Endothelial cell of umbilical vein (primary cell): ENCODE measurements at regions of chr6 and their contacts with region 1.

Region 1: DNA sequence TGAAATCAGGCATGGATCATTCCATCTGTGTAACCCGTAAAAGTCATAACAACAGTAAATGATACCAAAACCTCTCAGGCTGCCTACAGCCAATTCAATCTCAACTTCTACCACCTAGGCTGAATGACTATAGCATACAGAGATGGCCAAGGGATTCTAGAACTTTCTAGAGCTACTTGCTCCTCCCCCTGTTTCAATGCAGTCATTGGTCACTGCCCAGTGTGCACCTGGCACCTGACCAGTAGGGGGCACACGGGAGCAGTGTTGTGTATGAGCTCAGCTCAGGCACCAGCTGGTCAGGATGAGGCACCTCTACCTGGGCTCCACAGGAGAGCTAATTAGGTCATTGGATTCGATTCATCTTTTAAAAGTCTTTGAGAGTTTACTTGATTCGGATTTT is 86.2 kb downstream of the PLEKHG1 start:
- DNase-seq: peak; percentile 23
- H3K4me3 ChIP-seq: no peak overlapping the region
- H3K27ac ChIP-seq: no peak overlapping the region
- H3K4me1 ChIP-seq: peaks cover 60% of the 10 kb centered on the region
- H3K27me3 ChIP-seq: no peaks in the 10 kb centered on the region
- CTCF ChIP-seq: peak; percentile 44 to 46
- POLR2A ChIP-seq: no peak

Region 2: GRCh38 chr6:150373260-150373701 is 312.6 kb before region 1 on chr6:
- CTCF ChIA-PET with region 1: no interaction called
- POLR2A ChIA-PET with region 1: no interaction called
- dilution Hi-C with region 1: no loop called
- intact Hi-C with region 1: no loop called
- DNase-seq: no peak
- H3K4me3 ChIP-seq: no peak overlapping the region
- H3K27ac ChIP-seq: no peak overlapping the region
- H3K4me1 ChIP-seq: no peaks in the 10 kb centered on the region
- H3K27me3 ChIP-seq: peaks cover 2% of the 10 kb centered on the region in 2 experiments
- CTCF ChIP-seq: no peak
- POLR2A ChIP-seq: no peak

Region 3: DNA sequence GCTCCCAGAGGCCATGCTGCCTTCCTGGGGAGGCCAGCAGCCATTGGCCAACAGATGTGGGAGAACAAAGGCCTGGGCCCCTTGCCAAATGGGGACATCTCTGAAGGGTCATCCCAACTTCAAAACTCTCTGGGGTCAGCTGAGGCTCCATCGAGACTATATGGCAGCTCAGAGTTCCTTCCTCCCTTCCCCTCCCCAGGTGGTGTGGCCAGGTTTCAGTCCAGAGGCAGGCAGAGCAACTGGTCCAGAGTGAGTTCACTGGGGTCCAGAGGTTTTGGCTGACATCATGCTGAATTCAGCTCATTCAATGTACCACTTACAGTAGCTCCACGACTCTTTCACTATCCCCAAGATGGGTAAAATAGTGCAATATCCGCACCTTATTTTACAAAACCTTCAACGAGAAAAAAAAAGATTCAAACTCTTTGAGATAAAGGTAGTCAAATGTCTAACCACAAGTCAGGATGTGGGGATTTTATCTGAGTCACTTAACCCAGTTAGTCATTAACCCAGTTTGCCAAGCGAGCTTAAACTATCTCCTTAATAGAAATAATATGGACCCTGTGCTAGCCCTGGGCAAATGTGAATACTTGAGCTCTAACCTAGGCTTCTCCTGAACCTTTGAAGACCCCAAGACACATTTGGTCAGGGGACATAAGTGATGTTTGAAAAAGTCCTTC is 194.6 kb before region 1 on chr6:
- CTCF ChIA-PET with region 1: no interaction called
- POLR2A ChIA-PET with region 1: no interaction called
- dilution Hi-C with region 1: no loop called
- intact Hi-C with region 1: loop called (anchors 2 kb)
- DNase-seq: no peak
- H3K4me3 ChIP-seq: no peak overlapping the region
- H3K27ac ChIP-seq: no peak overlapping the region
- H3K4me1 ChIP-seq: peaks cover 18% of the 10 kb centered on the region
- H3K27me3 ChIP-seq: no peaks in the 10 kb centered on the region
- CTCF ChIP-seq: no peak
- POLR2A ChIP-seq: no peak

Region 4: GRCh38 chr6:150617496-150618460 is 68.1 kb before region 1 on chr6:
- CTCF ChIA-PET with region 1: no interaction called
- POLR2A ChIA-PET with region 1: no interaction called
- dilution Hi-C with region 1: no loop called
- intact Hi-C with region 1: loop called (anchors 1 kb)
- DNase-seq: peak; percentile 67
- H3K4me3 ChIP-seq: peak overlapping the region in 1 of 3 experiments; percentile 10
- H3K27ac ChIP-seq: peak overlapping the region; percentile 21
- H3K4me1 ChIP-seq: peaks cover 38% of the 10 kb centered on the region
- H3K27me3 ChIP-seq: no peaks in the 10 kb centered on the region
- CTCF ChIP-seq: no peak
- POLR2A ChIP-seq: no peak

Region 5: GRCh38 chr6:150697515-150697914 is 11.7 kb after region 1 on chr6:
- CTCF ChIA-PET with region 1: interaction called, 18 read pairs
- POLR2A ChIA-PET with region 1: no interaction called
- dilution Hi-C with region 1: no loop called
- intact Hi-C with region 1: no loop called
- DNase-seq: no peak
- H3K4me3 ChIP-seq: no peak overlapping the region
- H3K27ac ChIP-seq: no peak overlapping the region
- H3K4me1 ChIP-seq: no peaks in the 10 kb centered on the region
- H3K27me3 ChIP-seq: no peaks in the 10 kb centered on the region
- CTCF ChIP-seq: no peak
- POLR2A ChIP-seq: no peak

Region 6: DNA sequence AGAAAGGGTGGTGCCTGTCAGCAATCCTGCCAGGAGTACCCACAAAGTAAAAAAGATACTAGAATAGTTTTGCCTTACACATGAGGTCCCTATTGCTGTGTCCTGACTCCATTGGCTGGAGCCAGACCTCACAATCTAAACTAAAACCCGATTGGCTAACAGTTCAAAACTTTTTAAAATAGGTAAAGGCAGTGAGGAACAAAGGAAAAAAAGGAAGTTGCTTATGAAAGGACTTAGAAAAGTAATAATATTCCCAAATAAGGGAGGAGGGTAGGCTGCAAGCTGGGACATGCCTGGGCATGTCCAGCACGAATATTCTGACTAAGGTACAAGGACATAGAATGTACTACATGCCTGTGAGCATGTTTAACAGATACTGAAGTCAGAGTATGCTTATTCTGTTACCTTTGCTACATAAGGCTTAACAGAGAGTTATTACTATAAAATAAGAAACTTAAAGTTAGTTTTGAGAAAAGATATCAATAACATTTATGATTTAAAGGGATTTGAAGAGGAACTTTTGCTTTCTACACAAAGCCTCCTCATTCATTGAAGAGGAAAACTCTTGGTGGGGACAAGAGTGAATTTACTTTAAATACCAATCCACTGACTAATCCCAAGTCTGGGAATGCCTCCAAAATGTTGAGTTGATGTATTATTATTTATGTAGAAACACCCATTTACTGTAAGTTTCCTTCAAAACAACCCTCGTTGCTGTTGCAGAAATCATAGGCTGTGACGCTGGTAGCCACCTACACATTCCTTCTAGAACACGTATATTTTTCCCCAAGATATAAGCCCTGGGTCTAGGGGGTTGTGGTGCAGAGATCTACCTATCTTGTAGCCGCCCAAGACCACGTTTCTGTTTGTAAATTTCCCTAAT is 171.4 kb after region 1 on chr6:
- CTCF ChIA-PET with region 1: no interaction called
- POLR2A ChIA-PET with region 1: no interaction called
- dilution Hi-C with region 1: no loop called
- intact Hi-C with region 1: loop called (anchors 5 kb)
- DNase-seq: peak; percentile 99
- H3K4me3 ChIP-seq: no peak overlapping the region
- H3K27ac ChIP-seq: peak overlapping the region; percentile 100
- H3K4me1 ChIP-seq: peaks cover 24% of the 10 kb centered on the region
- H3K27me3 ChIP-seq: no peaks in the 10 kb centered on the region
- CTCF ChIP-seq: no peak
- POLR2A ChIP-seq: peak; percentile 83

Region 7: GRCh38 chr6:150959166-150959565 is 273.3 kb after region 1 on chr6:
- CTCF ChIA-PET with region 1: no interaction called
- POLR2A ChIA-PET with region 1: no interaction called
- dilution Hi-C with region 1: no loop called
- intact Hi-C with region 1: no loop called
- DNase-seq: peak; percentile 67
- H3K4me3 ChIP-seq: no peak overlapping the region
- H3K27ac ChIP-seq: peak overlapping the region; percentile 80
- H3K4me1 ChIP-seq: peaks cover 13% of the 10 kb centered on the region
- H3K27me3 ChIP-seq: no peaks in the 10 kb centered on the region
- CTCF ChIP-seq: no peak
- POLR2A ChIP-seq: no peak

Region 8: GRCh38 chr6:151044465-151045441 is 358.9 kb after region 1 on chr6:
- CTCF ChIA-PET with region 1: no interaction called
- POLR2A ChIA-PET with region 1: no interaction called
- dilution Hi-C with region 1: no loop called
- intact Hi-C with region 1: no loop called
- DNase-seq: peak; percentile 97
- H3K4me3 ChIP-seq: no peak overlapping the region
- H3K27ac ChIP-seq: peak overlapping the region; percentile 100
- H3K4me1 ChIP-seq: peaks cover 49% of the 10 kb centered on the region
- H3K27me3 ChIP-seq: no peaks in the 10 kb centered on the region
- CTCF ChIP-seq: no peak
- POLR2A ChIP-seq: peak; percentile 44